Head of caudate nucleus (tissue), 42 donors: ENCODE measurements at regions of chr14 and their contacts with region 1.

Region 1: GRCh38 chr14:25132732-25133422 is 82.9 kb upstream of the STXBP6 start:
- DNase-seq: peak; percentile 49 to 91 (median 78)

Region 2: GRCh38 chr14:24806061-24806678 is 326.7 kb before region 1 on chr14:
- intact Hi-C with region 1: loop called (anchors 10 kb)
- DNase-seq: peak; percentile 55 to 91 (median 78)

Region 3: GRCh38 chr14:25049568-25050268 is 83.2 kb before region 1 on chr14 and contains the start of gene STXBP6:
- intact Hi-C with region 1: loop called (anchors 5 kb)
- DNase-seq: peak; percentile 62 to 95 (median 90)

Region 4: DNA sequence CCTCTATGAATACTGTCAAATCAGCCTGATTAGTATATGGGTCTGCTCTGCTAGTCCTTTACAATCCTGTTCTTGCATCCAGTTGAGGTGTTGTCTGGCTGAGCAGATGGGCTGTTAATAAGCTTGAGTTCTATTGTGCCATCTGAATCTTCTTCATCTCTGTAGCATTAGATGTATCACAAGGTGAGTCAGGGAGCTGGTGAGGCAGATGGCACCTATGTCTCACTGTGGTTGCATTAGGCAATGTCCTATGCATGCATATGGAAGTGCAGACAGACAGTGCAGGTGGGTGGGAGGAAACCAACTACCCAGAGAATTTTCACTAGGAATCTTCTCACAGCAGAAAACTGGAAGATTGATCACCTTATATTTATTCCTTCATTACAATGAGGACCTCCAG is 82.7 kb after region 1 on chr14:
- intact Hi-C with region 1: no loop called
- DNase-seq: no peak